Activated CD4-positive, alpha-beta memory T cell treated with anti-CD3 and anti-CD28 coated beads, Interleukin-2, amount 10 ng/mL, durations not matched to agents 7 days and 5 days (primary cell): ENCODE measurements at regions of chr17 and their contacts with region 1.

Region 1: GRCh38 chr17:58006924-58007780 is at the start of gene SRSF1:
- DNase-seq: peak; percentile 98
- H3K4me3 Mint-ChIP-seq: peak within 1 kb of the TSS; percentile 99
- H3K27ac Mint-ChIP-seq: peak within 1 kb of the TSS; percentile 99
- H3K4me1 Mint-ChIP-seq: peaks cover 57% of the 10 kb centered on the region
- H3K27me3 Mint-ChIP-seq: no peaks in the 10 kb centered on the region
- total RNA-seq, gene SRSF1: 298 to 304 TPM

Region 2: GRCh38 chr17:57861000-57861789 is 146.0 kb before region 1 on chr17:
- CTCF ChIA-PET with region 1: interaction called, 137 read pairs
- POLR2A ChIA-PET with region 1: interaction called, 24 read pairs
- DNase-seq: peak; percentile 37
- H3K4me3 Mint-ChIP-seq: peak overlapping the region; percentile 54
- H3K27ac Mint-ChIP-seq: no peak overlapping the region
- H3K4me1 Mint-ChIP-seq: peaks cover 12% of the 10 kb centered on the region
- H3K27me3 Mint-ChIP-seq: peaks cover 45% of the 10 kb centered on the region

Region 3: GRCh38 chr17:57987580-57988421 is 19.4 kb before region 1 on chr17 and contains the start of gene VEZF1:
- CTCF ChIA-PET with region 1: interaction called, 7 read pairs
- POLR2A ChIA-PET with region 1: interaction called, 61 read pairs
- DNase-seq: peak; percentile 82
- H3K4me3 Mint-ChIP-seq: peak within 1 kb of the TSS; percentile 92
- H3K27ac Mint-ChIP-seq: peak within 1 kb of the TSS; percentile 89
- H3K4me1 Mint-ChIP-seq: peaks cover 68% of the 10 kb centered on the region
- H3K27me3 Mint-ChIP-seq: no peaks in the 10 kb centered on the region
- total RNA-seq, gene VEZF1: 44.6 to 46.6 TPM

Region 4: DNA sequence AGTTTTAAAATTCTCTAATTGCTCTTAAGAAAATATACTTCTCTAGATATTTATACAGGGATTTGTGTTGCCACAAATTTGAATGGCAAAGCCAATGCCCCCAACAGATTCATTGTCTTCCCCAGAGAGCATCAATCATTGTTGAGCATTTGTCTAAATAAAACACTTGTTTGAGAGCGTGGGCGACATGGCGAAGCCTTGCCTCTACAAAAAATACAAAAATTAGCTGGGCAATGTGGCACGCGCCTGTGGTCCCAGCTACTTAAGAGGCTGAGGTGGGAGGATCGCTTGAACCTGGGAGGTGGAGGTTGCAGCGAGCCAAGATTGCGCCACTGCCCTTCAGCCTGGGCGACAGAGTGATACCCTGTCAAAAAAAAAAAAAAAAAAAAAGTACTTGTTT is 13.2 kb after region 1 on chr17:
- CTCF ChIA-PET with region 1: interaction called, 5 read pairs
- POLR2A ChIA-PET with region 1: interaction called, 17 read pairs
- DNase-seq: no peak
- H3K4me3 Mint-ChIP-seq: no peak overlapping the region
- H3K27ac Mint-ChIP-seq: no peak overlapping the region
- H3K4me1 Mint-ChIP-seq: no peaks in the 10 kb centered on the region
- H3K27me3 Mint-ChIP-seq: peaks cover 14% of the 10 kb centered on the region

Region 5: DNA sequence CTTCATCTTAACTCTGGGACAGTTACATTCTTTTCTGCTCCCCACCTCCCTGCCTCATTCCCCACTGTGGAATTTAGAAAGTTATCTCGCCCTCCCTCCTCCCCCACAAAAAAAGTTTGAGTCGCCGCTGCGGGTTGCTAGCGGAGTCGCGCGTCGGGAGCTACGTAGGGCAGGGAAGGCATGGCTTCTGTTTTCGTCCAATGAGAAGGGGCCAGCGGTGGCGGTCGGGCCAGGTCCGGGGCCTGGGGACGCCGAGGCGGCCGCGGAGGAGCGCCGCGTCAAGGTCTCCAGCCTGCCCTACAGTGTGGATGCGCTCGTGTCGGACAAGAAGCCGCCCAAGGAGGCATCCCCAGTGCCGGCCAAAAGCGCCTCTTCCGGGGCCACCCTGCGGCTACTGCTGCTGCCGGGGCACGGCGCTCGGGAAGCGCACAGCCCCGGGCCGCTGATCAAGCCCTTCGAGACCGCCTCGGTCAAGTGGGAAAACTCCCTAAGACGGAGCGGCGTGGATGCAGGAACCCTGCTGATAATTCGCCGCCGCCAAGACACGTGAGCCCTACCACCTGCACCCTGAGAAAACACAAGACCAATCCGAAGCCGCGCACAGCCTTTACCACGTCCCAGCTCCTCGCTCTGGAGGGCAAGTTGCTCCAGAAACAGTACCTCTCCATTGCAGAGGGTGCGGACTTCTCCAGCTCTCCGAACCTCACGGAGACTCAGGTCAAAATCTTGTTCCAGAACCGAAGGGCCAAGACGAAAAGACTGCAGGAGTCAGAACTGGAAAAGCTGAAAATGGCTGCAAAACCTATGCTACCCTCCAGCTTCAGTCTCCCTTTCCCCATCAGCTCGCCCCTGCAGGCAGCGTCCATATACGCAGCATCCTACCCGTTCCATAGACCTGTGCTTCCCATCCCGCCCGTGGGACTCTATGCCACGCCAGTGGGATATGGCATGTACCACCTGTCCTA is 150.0 kb after region 1 on chr17:
- CTCF ChIA-PET with region 1: no interaction called
- POLR2A ChIA-PET with region 1: interaction called, 23 read pairs
- DNase-seq: peak; percentile 67
- H3K4me3 Mint-ChIP-seq: peak overlapping the region; percentile 77
- H3K27ac Mint-ChIP-seq: peak overlapping the region; percentile 65
- H3K4me1 Mint-ChIP-seq: peaks cover 63% of the 10 kb centered on the region
- H3K27me3 Mint-ChIP-seq: peaks cover 6% of the 10 kb centered on the region

Region 6: DNA sequence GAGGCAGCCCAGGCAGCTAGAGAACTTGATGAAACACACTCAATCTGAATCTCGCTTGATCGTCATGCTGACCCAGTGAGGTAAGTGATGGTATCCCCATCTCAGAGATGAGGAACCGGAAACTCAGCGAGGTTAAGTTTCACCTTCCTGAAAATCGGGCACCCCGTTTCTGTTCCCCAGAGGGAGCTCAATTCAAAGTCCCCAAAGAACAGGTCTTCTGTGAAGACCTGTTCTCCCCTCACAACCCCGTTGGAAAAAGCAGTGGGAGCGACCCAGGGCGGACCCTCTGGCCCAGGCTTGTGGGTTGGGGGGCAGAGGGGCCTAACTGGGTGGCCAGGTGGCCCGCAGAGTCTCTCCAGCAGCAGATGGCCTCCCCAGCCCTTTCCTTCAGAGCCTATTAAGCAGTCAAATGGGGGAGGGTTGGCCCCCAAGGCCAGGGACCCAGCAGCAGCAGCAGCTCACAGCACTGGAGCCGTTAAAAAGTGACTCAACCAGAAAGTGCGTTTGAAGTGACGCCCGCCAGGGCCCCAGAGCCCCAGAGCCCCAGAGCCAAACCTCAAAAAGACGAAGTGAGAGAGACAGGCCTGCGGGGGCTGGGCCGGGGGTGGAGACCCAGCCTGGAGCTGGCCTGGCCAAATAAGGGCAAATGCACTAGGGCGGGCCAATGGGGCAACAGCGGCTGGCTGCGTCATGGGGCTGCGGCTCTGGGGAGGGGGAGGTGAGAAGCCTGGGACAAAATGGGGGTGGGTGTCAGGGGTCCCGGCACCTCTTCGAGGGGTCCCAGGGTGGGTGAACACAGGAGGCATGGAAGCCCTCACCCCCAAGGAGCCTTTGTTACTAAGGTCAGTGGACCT is 330.7 kb after region 1 on chr17:
- CTCF ChIA-PET with region 1: no interaction called
- POLR2A ChIA-PET with region 1: interaction called, 16 read pairs
- DNase-seq: peak; percentile 96
- H3K4me3 Mint-ChIP-seq: peak overlapping the region; percentile 98
- H3K27ac Mint-ChIP-seq: peak overlapping the region; percentile 100
- H3K4me1 Mint-ChIP-seq: peaks cover 52% of the 10 kb centered on the region
- H3K27me3 Mint-ChIP-seq: no peaks in the 10 kb centered on the region